Activated CD4-positive, alpha-beta memory T cell treated with anti-CD3 and anti-CD28 coated beads, Interleukin-2, amount 10 ng/mL, durations not matched to agents 7 days and 5 days (primary cell): ENCODE measurements at regions of chr5 and their contacts with region 1.

Region 1: DNA sequence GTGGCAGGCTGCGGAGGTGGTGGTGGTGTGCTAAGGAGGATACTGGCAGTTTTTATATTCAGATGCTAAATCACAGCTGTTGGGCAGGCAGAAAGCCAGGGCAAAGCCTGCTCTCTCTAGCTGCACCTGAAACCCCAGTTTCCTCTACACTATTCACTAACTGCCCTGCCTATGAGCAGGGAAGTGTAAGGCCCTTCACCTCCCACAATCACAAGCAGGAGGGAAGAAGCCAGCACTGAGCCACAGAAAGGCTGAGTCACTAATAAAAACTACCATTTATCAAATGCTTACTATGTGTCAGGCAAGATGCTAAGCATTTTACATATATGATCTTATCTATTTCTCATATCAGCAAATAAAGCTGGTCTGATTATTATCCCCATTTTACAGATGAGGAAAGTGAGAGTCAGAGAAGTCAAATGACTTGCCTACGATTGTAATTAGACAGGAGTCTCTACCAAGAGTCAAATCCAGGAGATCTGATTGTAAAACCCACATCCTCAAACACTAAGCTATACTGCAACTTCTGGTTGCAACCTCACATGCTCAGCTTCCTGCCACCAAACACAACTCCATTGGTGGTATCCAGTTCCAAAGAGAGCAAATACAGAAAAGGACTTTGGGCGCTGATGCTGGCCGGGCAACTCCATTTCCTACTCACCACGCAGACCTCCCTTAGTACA is 17.7 kb upstream of the IL6ST start:
- DNase-seq: peak; percentile 63
- H3K4me3 Mint-ChIP-seq: no peak overlapping the region
- H3K27ac Mint-ChIP-seq: peak overlapping the region; percentile 76
- H3K4me1 Mint-ChIP-seq: peaks cover 32% of the 10 kb centered on the region
- H3K27me3 Mint-ChIP-seq: peaks cover 6% of the 10 kb centered on the region

Region 2: GRCh38 chr5:55534436-55535198 is 477.8 kb before region 1 on chr5 and contains the start of gene PLPP1:
- CTCF ChIA-PET with region 1: no interaction called
- POLR2A ChIA-PET with region 1: no interaction called
- DNase-seq: peak; percentile 87
- H3K4me3 Mint-ChIP-seq: peak within 1 kb of the TSS; percentile 86
- H3K27ac Mint-ChIP-seq: peak within 1 kb of the TSS; percentile 64
- H3K4me1 Mint-ChIP-seq: peaks cover 31% of the 10 kb centered on the region
- H3K27me3 Mint-ChIP-seq: no peaks in the 10 kb centered on the region
- total RNA-seq, gene PLPP1: 8.9 to 9.0 TPM

Region 3: GRCh38 chr5:55988979-55989638 is 23.3 kb before region 1 on chr5:
- CTCF ChIA-PET with region 1: interaction called, 5 read pairs
- POLR2A ChIA-PET with region 1: interaction called, 46 read pairs
- DNase-seq: no peak
- H3K4me3 Mint-ChIP-seq: no peak overlapping the region
- H3K27ac Mint-ChIP-seq: no peak overlapping the region
- H3K4me1 Mint-ChIP-seq: peaks cover 70% of the 10 kb centered on the region
- H3K27me3 Mint-ChIP-seq: no peaks in the 10 kb centered on the region

Region 4: DNA sequence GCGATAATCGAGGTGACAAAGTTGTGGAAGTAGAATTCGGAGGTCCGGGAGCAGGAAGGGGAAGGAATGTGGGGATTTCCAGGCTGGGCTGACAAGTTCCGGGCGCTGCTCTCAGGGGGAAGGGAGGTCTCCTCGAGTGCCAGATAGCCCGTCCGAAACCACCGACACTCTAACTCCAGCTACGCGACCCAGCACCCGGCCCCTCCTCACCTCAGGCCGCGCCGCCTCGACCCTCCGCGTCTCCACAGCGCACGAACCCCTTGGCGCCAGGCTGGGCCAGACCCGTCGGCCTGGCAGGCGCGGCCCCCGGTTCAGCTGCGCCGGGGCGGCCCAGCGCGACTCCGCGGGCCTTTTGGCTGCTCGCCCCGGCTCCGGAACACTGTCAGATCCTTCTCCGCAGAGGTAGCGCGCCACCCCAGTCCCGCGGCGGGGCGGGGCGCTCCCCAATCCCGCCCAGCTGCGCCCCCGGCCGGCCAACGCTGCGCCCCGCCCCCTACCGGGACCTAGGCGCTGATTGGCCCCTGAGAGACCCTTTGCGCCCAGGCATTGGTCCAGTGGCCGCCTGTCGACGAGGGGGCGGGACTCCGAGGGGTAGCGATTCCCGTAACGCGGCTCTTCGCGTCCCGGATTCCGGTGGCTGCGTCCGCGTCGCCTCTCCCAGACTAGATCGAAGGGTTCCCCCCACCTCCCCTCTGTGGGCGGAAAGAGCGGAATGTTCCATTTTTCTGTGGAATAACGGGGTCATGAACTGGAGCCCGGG is 17.7 kb before region 1 on chr5 and contains the start of gene IL6ST:
- CTCF ChIA-PET with region 1: interaction called, 5 read pairs
- POLR2A ChIA-PET with region 1: interaction called, 46 read pairs
- DNase-seq: peak; percentile 96
- H3K4me3 Mint-ChIP-seq: peak within 1 kb of the TSS; percentile 97
- H3K27ac Mint-ChIP-seq: peak within 1 kb of the TSS; percentile 94
- H3K4me1 Mint-ChIP-seq: peaks cover 62% of the 10 kb centered on the region
- H3K27me3 Mint-ChIP-seq: no peaks in the 10 kb centered on the region
- total RNA-seq, gene IL6ST: 51.0 to 53.4 TPM

Region 5: DNA sequence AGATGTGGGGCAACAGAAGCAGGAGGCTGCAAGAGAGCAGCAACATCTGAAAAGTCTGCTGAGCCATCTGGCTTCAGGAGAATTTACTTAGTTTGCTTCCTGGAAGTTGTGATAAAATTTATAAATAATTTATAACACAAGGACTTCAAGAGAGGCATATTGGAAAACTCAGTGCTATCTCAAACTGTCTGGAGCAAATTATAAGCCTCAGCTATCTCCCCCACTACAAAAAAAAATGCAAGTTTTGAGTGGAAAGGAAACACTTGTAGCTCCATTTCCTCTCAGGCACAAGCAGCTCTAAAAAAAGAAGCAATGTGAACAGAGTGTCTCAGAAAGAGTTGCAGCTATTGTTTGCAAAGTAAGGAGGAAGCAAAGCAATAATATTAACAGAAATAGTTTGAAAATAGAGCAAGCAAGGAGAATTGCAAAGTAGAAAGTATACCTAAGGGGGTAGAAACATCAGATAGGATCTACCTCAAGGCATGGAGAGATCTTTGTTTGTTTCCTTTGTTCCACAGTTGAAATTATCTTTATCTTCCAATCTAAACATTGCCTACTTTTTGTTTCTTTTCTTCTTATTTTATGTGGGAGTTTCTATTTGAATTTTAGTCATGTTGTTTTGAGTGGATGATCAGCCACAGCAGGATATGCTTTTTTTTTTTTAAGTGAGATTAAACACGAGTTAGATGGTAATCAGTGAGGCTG is 38.3 kb after region 1 on chr5:
- CTCF ChIA-PET with region 1: interaction called, 4 read pairs
- POLR2A ChIA-PET with region 1: interaction called, 15 read pairs
- DNase-seq: no peak
- H3K4me3 Mint-ChIP-seq: peak overlapping the region; percentile 4
- H3K27ac Mint-ChIP-seq: peak overlapping the region; percentile 81
- H3K4me1 Mint-ChIP-seq: peaks cover 28% of the 10 kb centered on the region
- H3K27me3 Mint-ChIP-seq: peaks cover 27% of the 10 kb centered on the region

Region 6: GRCh38 chr5:56059859-56060258 is 47.4 kb after region 1 on chr5:
- CTCF ChIA-PET with region 1: interaction called, 3 read pairs
- POLR2A ChIA-PET with region 1: interaction called, 15 read pairs
- DNase-seq: no peak
- H3K4me3 Mint-ChIP-seq: no peak overlapping the region
- H3K27ac Mint-ChIP-seq: no peak overlapping the region
- H3K4me1 Mint-ChIP-seq: peaks cover 57% of the 10 kb centered on the region
- H3K27me3 Mint-ChIP-seq: peaks cover 47% of the 10 kb centered on the region

Region 7: GRCh38 chr5:56148453-56148971 is 136.1 kb after region 1 on chr5:
- CTCF ChIA-PET with region 1: interaction called, 3 read pairs
- POLR2A ChIA-PET with region 1: interaction called, 11 read pairs
- DNase-seq: peak; percentile 61
- H3K4me3 Mint-ChIP-seq: no peak overlapping the region
- H3K27ac Mint-ChIP-seq: peak overlapping the region; percentile 67
- H3K4me1 Mint-ChIP-seq: peaks cover 45% of the 10 kb centered on the region
- H3K27me3 Mint-ChIP-seq: peaks cover 2% of the 10 kb centered on the region